Posterior vena cava (tissue), 2 donors: ENCODE measurements at regions of chr6 and their contacts with region 1.

Region 1: GRCh38 chr6:48057601-48058000 is 53.4 kb downstream of the PTCHD4 start:
- DNase-seq: no peak

Region 2: GRCh38 chr6:46156701-46157100 is 1900.9 kb before region 1 on chr6:
- intact Hi-C with region 1: loop called in 1 of 2 experiments (anchors 10 kb)
- DNase-seq: no peak

Region 3: GRCh38 chr6:47634210-47635047 is 423.2 kb before region 1 on chr6:
- intact Hi-C with region 1: no loop called
- DNase-seq: no peak